ENCODE measurements at regions of chr7 and their contacts with region 1.

Region 1: GRCh38 chr7:135634191-135634878 is 28.0 kb upstream of the STMP1 start:
- DNase-seq: no peak
- H3K4me3 ChIP-seq: no peak overlapping the region
- H3K4me1 ChIP-seq: no peaks in the 10 kb centered on the region
- H3K27me3 ChIP-seq: no peaks in the 10 kb centered on the region

Region 2: GRCh38 chr7:135584362-135585353 is 49.7 kb before region 1 on chr7:
- in situ Hi-C with region 1: loop called (anchors 5 kb)
- DNase-seq: no peak
- H3K4me3 ChIP-seq: no peak overlapping the region
- H3K4me1 ChIP-seq: no peaks in the 10 kb centered on the region
- H3K27me3 ChIP-seq: no peaks in the 10 kb centered on the region